ENCODE measurements at regions of chr17 and their contacts with region 1.

Region 1: DNA sequence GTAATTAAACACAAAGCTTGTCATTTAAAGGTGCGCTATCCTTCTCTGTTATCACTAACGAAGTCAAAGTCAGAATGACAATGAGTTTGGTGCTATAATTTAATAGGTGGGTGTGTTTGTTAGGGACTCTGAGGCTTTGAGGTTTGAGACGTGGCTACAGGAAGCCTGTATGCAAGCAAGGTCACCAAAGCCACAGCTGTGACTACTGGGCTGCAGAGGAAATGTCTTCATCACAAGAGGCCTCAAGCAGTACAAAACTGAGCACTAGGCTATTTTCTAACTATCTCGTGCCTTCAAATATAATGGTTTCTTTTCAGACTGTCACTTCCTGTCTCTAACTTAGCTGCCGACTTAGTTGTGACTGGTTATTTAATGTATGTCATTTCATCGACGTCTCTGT is 141.2 kb downstream of the AATF start:
- DNase-seq: no peak
- ATAC-seq: no peak
- H3K4me3 ChIP-seq: no peak overlapping the region
- H3K27ac ChIP-seq: no peak overlapping the region
- H3K4me1 ChIP-seq: peaks cover 7% of the 10 kb centered on the region in 2 donors
- H3K27me3 ChIP-seq: no peaks in the 10 kb centered on the region
- CTCF ChIP-seq: no peak
- POLR2A ChIP-seq: no peak

Region 2: DNA sequence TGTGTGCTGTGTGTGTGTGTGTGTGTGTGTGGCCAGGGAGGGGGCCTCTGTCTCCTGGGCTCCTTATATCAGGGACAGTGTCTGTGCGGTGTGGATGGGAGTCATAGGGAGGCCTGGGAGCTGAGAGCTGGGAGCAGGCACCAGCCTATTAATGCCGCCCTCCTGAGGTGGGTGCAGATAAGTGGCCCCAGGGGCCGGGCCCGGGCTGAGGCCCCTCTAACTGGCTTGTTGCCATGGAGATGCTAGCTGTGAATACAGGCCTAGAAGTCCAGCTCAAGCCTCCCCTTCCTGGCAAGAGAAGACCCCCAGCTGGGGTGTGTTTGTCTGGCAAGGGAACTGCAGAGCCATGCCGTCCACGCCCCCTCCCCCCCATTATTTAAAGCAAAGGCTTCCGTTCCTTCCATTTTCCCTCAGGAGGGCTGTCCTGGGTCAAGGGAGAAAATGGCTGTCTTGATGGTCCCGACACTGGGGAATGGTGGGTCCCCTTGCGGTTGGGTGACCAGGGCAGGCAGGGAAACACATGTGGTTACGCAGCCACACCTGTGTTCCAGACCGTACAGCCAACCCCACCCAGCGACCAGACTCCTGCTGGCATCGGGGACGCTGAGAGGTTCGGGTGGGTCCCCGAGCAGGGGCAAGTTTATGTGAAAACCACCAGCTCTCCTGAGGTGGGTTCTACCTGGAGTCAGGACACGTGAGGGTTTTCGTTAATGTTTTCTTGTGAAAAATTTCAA is 347.5 kb before region 1 on chr17:
- in situ Hi-C with region 1: no loop called
- intact Hi-C with region 1: no loop called
- DNase-seq: no peak
- ATAC-seq: no peak
- H3K4me3 ChIP-seq: no peak overlapping the region
- H3K27ac ChIP-seq: no peak overlapping the region
- H3K4me1 ChIP-seq: no peaks in the 10 kb centered on the region
- H3K27me3 ChIP-seq: no peaks in the 10 kb centered on the region
- CTCF ChIP-seq: no peak
- POLR2A ChIP-seq: no peak

Region 3: GRCh38 chr17:36980280-36980761 is 109.6 kb before region 1 on chr17:
- in situ Hi-C with region 1: loop called in 1 of 4 experiments (anchors 25 kb)
- intact Hi-C with region 1: no loop called
- DNase-seq: no peak
- ATAC-seq: no peak
- H3K4me3 ChIP-seq: no peak overlapping the region
- H3K27ac ChIP-seq: no peak overlapping the region
- H3K4me1 ChIP-seq: peaks cover 4 to 12% of the 10 kb centered on the region in 2 donors
- H3K27me3 ChIP-seq: no peaks in the 10 kb centered on the region
- CTCF ChIP-seq: no peak
- POLR2A ChIP-seq: no peak

Measured in gastrocnemius medialis (tissue), 4 donors.